CD8-positive, alpha-beta memory T cell (primary cell): ENCODE measurements at regions of chr1 and their contacts with region 1.

Region 1: DNA sequence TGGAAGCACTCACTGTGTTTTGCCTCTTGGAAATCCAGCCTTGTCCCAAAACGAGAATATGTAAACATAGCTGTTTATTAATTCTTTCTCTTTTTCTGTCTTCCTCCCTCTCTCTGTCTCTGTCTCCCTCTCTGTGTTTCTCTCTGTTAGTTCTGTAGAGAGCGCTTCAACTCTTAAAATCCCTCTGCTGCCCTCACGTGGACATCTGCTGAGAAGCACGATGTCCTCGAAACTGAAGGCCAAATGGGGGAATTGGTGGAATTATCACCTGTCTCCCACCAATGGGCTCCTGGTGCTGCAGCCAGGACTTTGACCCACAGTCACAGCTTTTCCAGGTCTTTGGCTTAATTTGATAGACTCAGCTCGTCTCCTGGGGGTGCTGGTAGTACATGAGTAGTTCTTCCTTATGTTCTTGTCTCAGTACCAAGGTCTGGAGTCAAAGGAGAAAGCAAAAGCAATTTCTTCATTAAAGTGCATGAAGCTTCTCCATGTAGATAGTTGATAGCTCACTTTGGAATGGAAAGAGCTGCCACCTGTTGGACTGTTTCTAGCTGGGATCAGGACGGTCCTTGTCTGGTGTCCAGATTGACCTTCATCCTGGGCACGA is 5.5 kb upstream of the GBP6 start:
- DNase-seq: peak; percentile 66 to 86 (median 69)
- H3K4me3 ChIP-seq: no peak overlapping the region
- H3K4me3 Mint-ChIP-seq: peak overlapping the region in 6 of 7 donors; percentile 3 to 73 (median 26)
- H3K27ac ChIP-seq: no peak overlapping the region
- H3K27ac Mint-ChIP-seq: peak overlapping the region in 7 of 8 donors; percentile 9 to 76 (median 61)
- H3K4me1 ChIP-seq: peaks cover 17% of the 10 kb centered on the region
- H3K4me1 Mint-ChIP-seq: peaks cover 26 to 47% (median 40%) of the 10 kb centered on the region in 3 donors
- H3K27me3 ChIP-seq: no peaks in the 10 kb centered on the region
- H3K27me3 Mint-ChIP-seq: no peaks in the 10 kb centered on the region

Region 2: DNA sequence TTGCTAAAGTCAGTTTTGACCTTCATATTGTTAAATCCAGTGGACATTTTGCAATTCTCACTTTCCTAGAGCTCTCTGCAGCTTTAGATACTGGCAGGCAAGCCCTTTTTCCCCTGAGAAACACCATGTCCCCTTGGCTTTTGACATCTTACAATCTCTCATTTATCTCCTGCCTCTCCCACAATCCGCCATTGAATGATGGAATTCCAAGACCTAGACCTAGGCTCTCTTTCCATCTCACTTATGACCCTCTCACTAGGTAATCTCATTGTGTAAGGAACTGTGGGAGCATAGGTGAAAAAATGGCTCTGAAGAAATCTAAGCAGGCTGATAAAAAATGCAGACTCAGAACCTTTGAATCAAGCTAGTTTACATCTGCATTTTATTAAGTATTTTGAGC is 368.0 kb before region 1 on chr1:
- CTCF ChIA-PET with region 1: interaction called, 22 read pairs
- POLR2A ChIA-PET with region 1: no interaction called
- DNase-seq: no peak
- H3K4me3 ChIP-seq: no peak overlapping the region
- H3K4me3 Mint-ChIP-seq: peak overlapping the region in 4 of 7 donors; percentile 10 to 75 (median 26)
- H3K27ac ChIP-seq: no peak overlapping the region
- H3K27ac Mint-ChIP-seq: peak overlapping the region in 6 of 8 donors; percentile 18 to 91 (median 46)
- H3K4me1 ChIP-seq: peaks cover 32% of the 10 kb centered on the region
- H3K4me1 Mint-ChIP-seq: peaks cover 36 to 54% (median 53%) of the 10 kb centered on the region in 3 donors
- H3K27me3 ChIP-seq: no peaks in the 10 kb centered on the region
- H3K27me3 Mint-ChIP-seq: no peaks in the 10 kb centered on the region

Region 3: DNA sequence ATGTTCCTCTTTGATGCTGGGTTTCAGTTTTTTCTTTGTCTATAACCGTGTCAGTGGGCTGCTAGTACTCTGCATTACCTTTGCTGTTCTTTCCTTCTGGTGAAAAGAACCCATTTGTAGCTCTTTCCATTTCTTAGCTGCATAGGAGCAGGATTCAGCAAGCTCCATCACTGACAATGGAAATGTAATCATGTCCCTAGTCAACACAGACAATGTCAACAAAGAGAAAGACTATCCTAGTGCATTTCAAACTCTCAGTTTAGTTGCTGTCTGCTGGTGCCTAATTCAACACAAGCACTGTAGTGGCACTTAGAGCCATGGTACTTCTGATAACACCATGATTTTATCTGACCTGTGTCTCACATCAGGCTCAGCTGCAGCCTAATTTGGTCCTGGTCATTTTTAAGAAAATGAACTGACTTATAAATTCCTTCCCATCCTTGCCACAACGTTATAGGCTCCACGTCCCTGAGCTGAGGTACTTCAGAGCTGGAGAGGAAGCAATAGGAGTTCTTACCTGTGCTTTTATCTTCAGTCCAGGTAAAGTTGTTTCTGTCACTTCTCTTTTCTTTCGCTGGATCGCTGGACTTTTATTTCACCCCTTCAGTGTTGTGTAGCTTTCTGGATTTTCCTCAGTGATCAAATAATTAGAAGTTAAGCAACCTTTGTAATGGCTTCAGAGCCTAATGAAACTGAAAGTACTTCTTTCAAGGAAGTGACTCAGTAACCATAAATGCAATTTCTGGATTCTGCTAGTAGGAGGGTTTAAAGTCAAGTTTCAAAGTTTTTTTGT is 336.0 kb before region 1 on chr1 and contains the start of gene GBP3:
- CTCF ChIA-PET with region 1: interaction called, 11 read pairs
- POLR2A ChIA-PET with region 1: no interaction called
- DNase-seq: peak in 2 of 5 donors; percentile 34 to 44
- H3K4me3 ChIP-seq: peak within 1 kb of the TSS; percentile 82
- H3K4me3 Mint-ChIP-seq: peak within 1 kb of the TSS; percentile 92 to 96 (median 93)
- H3K27ac ChIP-seq: peak within 1 kb of the TSS; percentile 63
- H3K27ac Mint-ChIP-seq: peak within 1 kb of the TSS; percentile 86 to 99 (median 94)
- H3K4me1 ChIP-seq: peaks cover 35% of the 10 kb centered on the region
- H3K4me1 Mint-ChIP-seq: peaks cover 49 to 56% (median 55%) of the 10 kb centered on the region in 3 donors
- H3K27me3 ChIP-seq: no peaks in the 10 kb centered on the region
- H3K27me3 Mint-ChIP-seq: peaks cover 0 to 7% of the 10 kb centered on the region in 2 donors
- total RNA-seq, gene GBP3: 8.4 to 12.1 TPM

Region 4: GRCh38 chr1:89112871-89113613 is 245.3 kb before region 1 on chr1:
- CTCF ChIA-PET with region 1: interaction called, 11 read pairs
- POLR2A ChIA-PET with region 1: no interaction called
- DNase-seq: no peak
- H3K4me3 ChIP-seq: no peak overlapping the region
- H3K4me3 Mint-ChIP-seq: no peak overlapping the region
- H3K27ac ChIP-seq: no peak overlapping the region
- H3K27ac Mint-ChIP-seq: peak overlapping the region in 6 of 8 donors; percentile 52 to 88 (median 72)
- H3K4me1 ChIP-seq: peaks cover 3% of the 10 kb centered on the region
- H3K4me1 Mint-ChIP-seq: peaks cover 39 to 52% (median 41%) of the 10 kb centered on the region in 3 donors
- H3K27me3 ChIP-seq: no peaks in the 10 kb centered on the region
- H3K27me3 Mint-ChIP-seq: no peaks in the 10 kb centered on the region

Region 5: DNA sequence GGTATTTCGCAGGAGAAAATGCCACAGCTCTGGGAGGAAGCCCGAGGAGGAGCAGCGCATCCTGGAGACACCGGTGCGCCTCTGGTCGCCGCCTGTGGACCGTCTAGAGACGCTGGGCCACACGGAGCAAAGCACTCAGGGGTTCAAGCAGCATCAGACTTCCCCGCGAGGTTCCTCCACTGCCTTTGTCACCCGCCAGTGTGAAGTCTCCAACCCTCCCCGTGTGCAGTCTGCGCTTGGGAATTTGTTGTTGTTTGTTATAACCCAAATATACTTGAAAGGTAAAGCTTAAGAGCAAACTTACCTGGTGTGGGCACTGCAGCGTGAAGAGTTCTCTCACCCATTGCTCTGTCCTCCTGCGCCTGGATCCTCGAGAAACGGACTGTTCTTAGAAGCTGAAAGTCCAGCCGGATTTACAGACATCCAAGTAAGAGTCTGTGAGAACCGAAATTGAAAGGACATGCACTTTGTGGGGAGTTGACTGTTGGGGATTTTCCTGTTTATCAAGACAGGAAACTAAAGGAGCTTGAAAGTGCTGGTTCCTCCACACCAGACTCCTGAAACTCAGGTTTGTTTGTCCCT is 159.8 kb before region 1 on chr1 and contains the start of gene GBP4:
- CTCF ChIA-PET with region 1: interaction called, 14 read pairs
- POLR2A ChIA-PET with region 1: interaction called, 3 read pairs
- DNase-seq: peak; percentile 28 to 61 (median 47)
- H3K4me3 ChIP-seq: peak within 1 kb of the TSS; percentile 95
- H3K4me3 Mint-ChIP-seq: peak within 1 kb of the TSS; percentile 94 to 99 (median 98)
- H3K27ac ChIP-seq: peak within 1 kb of the TSS; percentile 83
- H3K27ac Mint-ChIP-seq: peak within 1 kb of the TSS; percentile 92 to 98 (median 98)
- H3K4me1 ChIP-seq: peaks cover 59% of the 10 kb centered on the region
- H3K4me1 Mint-ChIP-seq: peaks cover 82 to 86% (median 83%) of the 10 kb centered on the region in 3 donors
- H3K27me3 ChIP-seq: no peaks in the 10 kb centered on the region
- H3K27me3 Mint-ChIP-seq: no peaks in the 10 kb centered on the region
- total RNA-seq, gene GBP4: 24.2 to 26.6 TPM

Region 6: DNA sequence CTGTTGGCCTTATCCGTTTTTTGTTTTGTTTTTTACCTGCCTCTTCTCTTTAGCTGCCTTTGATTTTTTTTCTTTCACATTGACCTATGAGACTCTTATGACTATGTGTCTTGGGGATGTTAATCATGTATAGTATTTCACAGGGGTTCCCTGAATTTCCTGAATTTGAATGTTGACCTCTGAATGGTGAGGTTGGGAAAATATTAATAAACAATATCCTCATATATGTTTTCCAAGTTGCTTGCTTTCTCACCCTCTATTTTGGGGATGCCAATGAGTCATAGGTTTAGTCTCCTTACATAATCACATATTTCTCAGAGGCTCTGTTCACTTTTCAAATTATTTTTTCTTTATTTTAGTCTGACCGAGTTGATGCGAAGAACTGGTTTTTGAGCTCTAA is 115.3 kb before region 1 on chr1:
- CTCF ChIA-PET with region 1: no interaction called
- POLR2A ChIA-PET with region 1: no interaction called
- DNase-seq: no peak
- H3K4me3 ChIP-seq: no peak overlapping the region
- H3K4me3 Mint-ChIP-seq: no peak overlapping the region
- H3K27ac ChIP-seq: no peak overlapping the region
- H3K27ac Mint-ChIP-seq: no peak overlapping the region
- H3K4me1 ChIP-seq: peaks cover 7% of the 10 kb centered on the region
- H3K4me1 Mint-ChIP-seq: peaks cover 20 to 40% (median 23%) of the 10 kb centered on the region in 3 donors
- H3K27me3 ChIP-seq: no peaks in the 10 kb centered on the region
- H3K27me3 Mint-ChIP-seq: no peaks in the 10 kb centered on the region